Right ventricle myocardium superior (tissue), 1 donor: ENCODE measurements at regions of chr15 and their contacts with region 1.

Region 1: GRCh38 chr15:31215490-31216214 is 111.0 kb upstream of the KLF13 start:
- DNase-seq: peak; percentile 93
- ATAC-seq: peak; percentile 91

Region 2: DNA sequence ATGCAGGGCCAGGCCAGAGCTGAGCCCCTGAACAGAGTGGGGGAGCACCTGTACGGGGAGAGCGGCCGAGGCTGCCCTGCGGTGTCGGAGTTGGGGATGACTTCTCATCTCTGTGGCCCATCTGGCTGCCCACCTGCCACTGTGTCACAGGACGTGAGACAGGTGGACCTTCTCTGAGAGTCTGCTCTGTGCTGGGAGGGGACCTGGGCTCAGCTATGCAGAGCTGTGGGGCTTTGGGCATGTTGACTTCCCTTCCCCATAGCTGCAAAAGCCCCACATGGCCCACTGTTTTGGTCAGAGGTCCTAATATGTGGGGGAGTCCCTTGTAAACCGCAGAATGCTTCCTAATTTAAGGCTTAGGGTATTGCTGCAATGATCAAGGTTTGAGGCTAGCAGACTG is 46.1 kb before region 1 on chr15:
- intact Hi-C with region 1: no loop called
- DNase-seq: no peak
- ATAC-seq: no peak

Region 3: GRCh38 chr15:31265871-31266711 is 50.4 kb after region 1 on chr15:
- intact Hi-C with region 1: loop called (anchors 5 kb)
- DNase-seq: peak; percentile 80
- ATAC-seq: peak; percentile 38

Region 4: GRCh38 chr15:31391687-31392671 is 176.3 kb after region 1 on chr15:
- intact Hi-C with region 1: loop called (anchors 5 kb)
- DNase-seq: peak; percentile 94
- ATAC-seq: peak; percentile 84

Region 5: GRCh38 chr15:31488426-31489204 is 273.0 kb after region 1 on chr15:
- intact Hi-C with region 1: loop called (anchors 5 kb)
- DNase-seq: peak; percentile 69
- ATAC-seq: peak; percentile 87

Region 6: DNA sequence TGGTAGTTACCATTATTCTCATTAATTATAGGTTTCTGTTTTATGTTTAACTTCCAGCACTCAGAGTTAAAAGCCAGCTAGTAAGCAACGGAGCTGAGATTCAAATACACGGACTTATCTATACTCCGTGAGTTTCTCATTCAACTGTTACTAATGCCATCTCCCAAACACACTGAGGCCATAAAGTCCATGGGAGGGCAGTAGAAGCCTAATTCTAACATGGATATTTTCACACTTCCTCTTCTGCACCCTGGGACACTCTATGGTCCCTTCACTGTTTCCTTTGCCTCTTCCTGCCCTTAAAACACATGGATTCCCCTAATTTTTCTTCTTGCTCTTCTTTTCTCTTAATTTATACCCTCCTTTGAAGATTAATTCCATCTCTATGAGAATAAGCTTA is 356.0 kb after region 1 on chr15:
- intact Hi-C with region 1: no loop called
- DNase-seq: no peak
- ATAC-seq: no peak